Dendritic cell treated with granulocyte-macrophage colony-stimulating factor and Interleukin-4, amounts not matched to agents 40 ng/mL and 50 ng/mL, for 4 days (primary cell): ENCODE measurements at regions of chr10 and their contacts with region 1.

Region 1: DNA sequence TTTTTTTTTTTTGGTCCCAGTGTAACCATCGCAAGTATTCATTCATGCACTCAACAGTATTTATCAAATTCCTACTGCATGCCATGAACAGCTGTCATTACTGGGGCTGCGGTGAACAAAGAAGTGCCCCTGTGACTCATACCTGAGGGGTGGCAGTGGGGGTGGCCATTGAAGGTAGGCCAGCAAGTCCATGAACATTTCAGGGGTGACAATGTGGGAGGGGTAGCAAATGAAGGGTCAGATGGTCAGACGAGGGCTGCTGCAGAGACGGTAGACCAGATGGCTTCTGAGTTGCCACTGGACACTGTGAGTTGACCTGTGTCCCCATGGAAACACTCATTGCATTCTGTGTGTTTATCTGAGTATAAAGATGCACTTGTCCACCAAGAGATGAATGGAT is 92.5 kb upstream of the PITRM1 start:
- H3K4me3 Mint-ChIP-seq: no peak overlapping the region
- H3K27ac Mint-ChIP-seq: peak overlapping the region; percentile 12
- H3K4me1 Mint-ChIP-seq: peaks cover 17% of the 10 kb centered on the region
- H3K27me3 Mint-ChIP-seq: peaks cover 12% of the 10 kb centered on the region

Region 2: GRCh38 chr10:3162533-3162932 is 102.6 kb before region 1 on chr10:
- intact Hi-C with region 1: no loop called
- H3K4me3 Mint-ChIP-seq: no peak overlapping the region
- H3K27ac Mint-ChIP-seq: no peak overlapping the region
- H3K4me1 Mint-ChIP-seq: no peaks in the 10 kb centered on the region
- H3K27me3 Mint-ChIP-seq: no peaks in the 10 kb centered on the region

Region 3: DNA sequence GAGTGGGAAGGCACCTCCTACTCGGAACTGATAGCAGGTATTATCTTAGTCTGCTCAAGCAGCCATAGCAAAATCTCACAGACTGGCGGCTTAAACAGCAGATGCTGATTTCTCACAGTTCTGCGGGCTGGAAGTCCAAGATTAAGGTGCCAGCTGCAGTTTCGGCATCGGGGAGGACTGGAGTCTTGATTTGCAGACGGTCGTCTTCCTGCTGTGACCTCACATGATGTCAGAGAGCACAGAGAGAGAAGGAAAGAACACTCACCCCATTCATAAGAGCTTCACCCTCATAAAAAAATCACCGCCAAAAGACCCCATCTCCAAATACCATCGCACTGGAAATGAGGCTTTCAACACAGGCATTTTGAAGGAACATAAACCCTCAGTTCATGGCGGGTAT is 124.0 kb after region 1 on chr10:
- intact Hi-C with region 1: loop called (anchors 10 kb)
- H3K4me3 Mint-ChIP-seq: no peak overlapping the region
- H3K27ac Mint-ChIP-seq: no peak overlapping the region
- H3K4me1 Mint-ChIP-seq: peaks cover under 1% of the 10 kb centered on the region
- H3K27me3 Mint-ChIP-seq: peaks cover 11% of the 10 kb centered on the region

Region 4: GRCh38 chr10:3465406-3465891 is 200.4 kb after region 1 on chr10:
- intact Hi-C with region 1: no loop called
- H3K4me3 Mint-ChIP-seq: peak overlapping the region; percentile 35
- H3K27ac Mint-ChIP-seq: peak overlapping the region; percentile 78
- H3K4me1 Mint-ChIP-seq: peaks cover 50% of the 10 kb centered on the region
- H3K27me3 Mint-ChIP-seq: no peaks in the 10 kb centered on the region

Region 5: DNA sequence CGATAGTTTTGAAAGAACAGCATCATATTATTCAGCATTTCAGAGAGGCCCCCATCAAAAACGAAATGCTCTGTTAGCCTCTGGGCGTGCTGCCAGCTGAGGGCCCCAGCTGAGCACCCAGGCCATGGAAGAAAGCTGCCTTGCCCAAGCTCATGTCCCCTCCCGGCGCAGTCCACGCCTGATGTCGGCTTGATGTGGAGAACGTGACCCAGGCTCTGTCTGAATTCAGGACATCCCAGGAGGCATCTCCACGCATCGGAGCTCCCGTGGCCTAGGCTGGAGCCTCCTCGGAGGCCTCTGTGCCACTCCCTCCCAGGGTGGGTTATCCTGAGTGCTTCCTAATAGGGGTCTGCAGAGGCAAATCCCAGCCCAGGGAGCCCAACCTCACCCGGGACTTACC is 1342.6 kb after region 1 on chr10:
- intact Hi-C with region 1: no loop called
- H3K4me3 Mint-ChIP-seq: no peak overlapping the region
- H3K27ac Mint-ChIP-seq: no peak overlapping the region
- H3K4me1 Mint-ChIP-seq: no peaks in the 10 kb centered on the region
- H3K27me3 Mint-ChIP-seq: peaks cover 2% of the 10 kb centered on the region